Mammary epithelial cell (primary cell): ENCODE measurements at regions of chr13 and their contacts with region 1.

Region 1: DNA sequence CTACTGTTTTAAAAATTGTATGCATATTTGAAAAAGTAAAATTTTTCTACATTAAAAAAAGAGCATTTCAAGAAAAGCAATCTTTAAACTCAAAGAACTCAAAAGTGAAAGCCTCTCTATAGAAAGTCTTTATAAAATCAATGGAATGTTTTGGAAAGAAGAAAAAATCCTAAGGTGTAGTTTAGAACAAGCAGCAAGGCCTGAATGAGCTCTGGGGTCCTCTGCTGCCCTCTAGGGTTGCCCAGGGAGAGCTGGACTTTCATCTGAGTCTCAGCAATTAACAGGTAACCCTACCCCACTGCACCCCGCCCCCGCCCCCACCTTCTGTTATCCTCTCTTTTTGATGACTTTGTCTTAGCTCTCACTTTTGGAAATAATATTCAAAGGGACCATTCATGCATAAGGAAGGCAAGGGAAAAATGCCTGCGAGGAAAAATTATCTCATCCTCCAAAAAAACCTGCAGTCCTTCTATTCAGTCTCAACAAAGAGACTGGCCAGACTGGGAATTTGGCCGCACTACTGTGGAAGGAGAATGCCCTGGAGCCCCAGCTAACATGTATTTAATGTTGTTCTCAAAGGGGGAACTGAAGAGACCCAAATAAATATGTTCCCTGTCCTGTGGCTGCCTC is 24.1 kb downstream of the SLC25A30 start:
- DNase-seq: peak; percentile 45
- H3K4me3 ChIP-seq: no peak overlapping the region
- H3K27ac ChIP-seq: no peak overlapping the region
- H3K4me1 ChIP-seq: no peaks in the 10 kb centered on the region
- H3K27me3 ChIP-seq: no peaks in the 10 kb centered on the region
- CTCF ChIP-seq: peak; percentile 76 to 80

Region 2: GRCh38 chr13:43489233-43489632 is 1904.8 kb before region 1 on chr13:
- CTCF ChIA-PET with region 1: no interaction called
- dilution Hi-C with region 1: no loop called
- in situ Hi-C with region 1: no loop called
- intact Hi-C with region 1: no loop called
- DNase-seq: no peak
- H3K4me3 ChIP-seq: no peak overlapping the region
- H3K27ac ChIP-seq: no peak overlapping the region
- H3K4me1 ChIP-seq: no peaks in the 10 kb centered on the region
- H3K27me3 ChIP-seq: no peaks in the 10 kb centered on the region
- CTCF ChIP-seq: no peak

Region 3: GRCh38 chr13:45047394-45048310 is 346.4 kb before region 1 on chr13:
- CTCF ChIA-PET with region 1: interaction called, 3 read pairs
- dilution Hi-C with region 1: no loop called
- in situ Hi-C with region 1: no loop called
- intact Hi-C with region 1: loop called (anchors 1 kb)
- DNase-seq: peak; percentile 77
- H3K4me3 ChIP-seq: peak overlapping the region; percentile 48 to 59 (median 52)
- H3K27ac ChIP-seq: peak overlapping the region; percentile 16
- H3K4me1 ChIP-seq: peaks cover 9% of the 10 kb centered on the region
- H3K27me3 ChIP-seq: no peaks in the 10 kb centered on the region
- CTCF ChIP-seq: peak; percentile 92 to 94

Region 4: GRCh38 chr13:45332036-45332830 is 61.8 kb before region 1 on chr13:
- CTCF ChIA-PET with region 1: no interaction called
- dilution Hi-C with region 1: loop called (anchors 10 kb)
- in situ Hi-C with region 1: no loop called
- intact Hi-C with region 1: loop called (anchors 2 kb)
- DNase-seq: peak; percentile 88
- H3K4me3 ChIP-seq: no peak overlapping the region
- H3K27ac ChIP-seq: peak overlapping the region; percentile 69
- H3K4me1 ChIP-seq: peaks cover 90% of the 10 kb centered on the region
- H3K27me3 ChIP-seq: no peaks in the 10 kb centered on the region
- CTCF ChIP-seq: no peak

Region 5: GRCh38 chr13:45367358-45367757 is 26.7 kb before region 1 on chr13:
- CTCF ChIA-PET with region 1: no interaction called
- dilution Hi-C with region 1: no loop called
- in situ Hi-C with region 1: no loop called
- intact Hi-C with region 1: loop called (anchors 1 kb)
- DNase-seq: peak; percentile 99
- H3K4me3 ChIP-seq: no peak overlapping the region
- H3K27ac ChIP-seq: peak overlapping the region; percentile 92
- H3K4me1 ChIP-seq: peaks cover 39% of the 10 kb centered on the region
- H3K27me3 ChIP-seq: no peaks in the 10 kb centered on the region
- CTCF ChIP-seq: no peak

Region 6: DNA sequence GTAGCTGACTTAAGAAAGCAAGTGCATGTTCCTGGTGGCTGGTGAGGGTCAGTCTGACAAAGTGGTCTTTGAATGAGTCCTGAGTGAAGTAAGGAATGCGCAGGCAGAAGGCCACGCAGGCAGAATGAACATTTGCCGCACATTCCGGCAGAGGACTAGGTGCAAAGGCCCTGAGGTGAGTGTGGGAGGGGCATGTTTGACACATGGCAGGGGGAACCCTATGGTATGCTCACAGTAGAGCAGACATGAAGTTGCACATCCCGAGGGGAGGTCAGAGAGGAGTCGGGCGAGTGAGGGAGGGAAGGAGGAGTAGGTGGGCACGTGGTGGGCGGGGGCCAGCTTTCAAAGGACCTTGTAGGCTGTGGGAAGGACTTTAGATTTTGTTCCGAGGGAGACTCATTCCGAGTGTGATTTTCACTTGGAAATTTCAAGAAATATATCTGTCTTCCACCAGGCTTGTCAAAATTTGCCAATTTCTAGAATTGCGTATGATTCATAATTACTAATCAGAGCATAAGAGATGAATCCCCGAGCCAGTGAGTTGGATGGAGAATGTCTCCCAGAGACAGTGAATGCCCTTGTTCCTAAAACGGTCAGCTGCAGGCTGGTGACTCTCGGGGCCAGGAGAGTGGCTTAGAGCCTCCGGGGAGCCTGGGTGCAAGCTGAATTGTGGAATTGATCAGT is 181.2 kb after region 1 on chr13:
- CTCF ChIA-PET with region 1: interaction called, 3 read pairs
- dilution Hi-C with region 1: loop called (anchors 5 kb)
- in situ Hi-C with region 1: no loop called
- intact Hi-C with region 1: no loop called
- DNase-seq: peak; percentile 9
- H3K4me3 ChIP-seq: no peak overlapping the region
- H3K27ac ChIP-seq: no peak overlapping the region
- H3K4me1 ChIP-seq: no peaks in the 10 kb centered on the region
- H3K27me3 ChIP-seq: no peaks in the 10 kb centered on the region
- CTCF ChIP-seq: no peak